ENCODE measurements at regions of chr19 and their contacts with region 1.

Region 1: DNA sequence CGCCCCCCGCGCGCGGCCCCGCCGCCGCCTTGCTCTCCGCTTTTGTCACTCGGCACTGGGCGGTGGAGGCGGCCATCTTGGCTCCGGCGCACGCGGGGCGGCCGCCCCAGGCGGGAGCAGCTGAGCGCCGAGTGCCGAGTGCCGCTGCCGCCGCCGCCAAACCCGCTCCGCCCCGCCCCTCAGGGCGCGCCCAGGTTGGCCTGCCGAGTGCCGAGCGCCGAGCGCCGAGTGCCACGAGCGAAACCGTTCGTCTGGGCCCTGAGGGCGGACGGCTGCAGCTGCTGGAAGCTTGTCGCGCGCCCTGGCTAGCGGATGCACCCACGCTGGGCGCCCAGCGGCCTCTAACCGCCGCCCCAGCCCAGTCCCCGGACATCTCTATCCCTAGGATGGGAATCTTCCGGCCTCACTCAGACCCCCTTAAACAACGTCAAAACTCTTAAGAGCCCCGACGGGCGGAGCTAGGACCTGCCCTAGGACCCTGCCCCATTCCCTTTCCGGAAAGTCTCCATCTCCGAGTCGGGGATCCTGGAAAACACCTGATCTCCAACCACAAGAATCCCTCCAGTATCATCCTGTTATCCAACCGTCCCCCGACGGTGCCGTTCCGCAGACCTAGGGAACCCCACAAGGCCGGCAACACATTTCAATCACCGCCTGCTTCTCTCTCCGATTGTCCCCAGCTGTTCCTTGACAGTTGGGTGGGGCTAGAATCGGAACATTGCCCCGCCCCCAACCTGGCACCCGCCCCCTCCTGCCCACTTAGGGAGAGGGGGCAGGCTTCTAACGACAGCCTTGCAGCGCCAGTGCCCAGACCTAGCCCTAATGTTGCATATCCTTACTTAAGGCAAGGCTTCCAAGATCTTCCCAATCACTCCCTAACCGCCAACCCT is 14.1 kb upstream of the AKAP8L start:
- DNase-seq: peak; percentile 93
- H3K4me3 ChIP-seq: peak overlapping the region; percentile 58 to 99 (median 92)
- H3K27ac ChIP-seq: peak overlapping the region; percentile 84 to 95 (median 88)
- H3K4me1 ChIP-seq: peaks cover 0 to 52% (median 42%) of the 10 kb centered on the region in 4 donors
- H3K27me3 ChIP-seq: no peaks in the 10 kb centered on the region
- CTCF ChIP-seq: no peak
- EP300 ChIP-seq: no peak
- POLR2A ChIP-seq: no peak

Region 2: GRCh38 chr19:15418588-15419412 is 14.1 kb before region 1 on chr19 and contains the start of gene AKAP8L:
- intact Hi-C with region 1: loop called (anchors 1 kb)
- DNase-seq: peak; percentile 100
- H3K4me3 ChIP-seq: peak within 1 kb of the TSS; percentile 73 to 81 (median 78)
- H3K27ac ChIP-seq: peak within 1 kb of the TSS; percentile 85 to 94 (median 90)
- H3K4me1 ChIP-seq: peaks cover 0 to 48% (median 42%) of the 10 kb centered on the region in 4 donors
- H3K27me3 ChIP-seq: no peaks in the 10 kb centered on the region
- CTCF ChIP-seq: peak; percentile 43 to 50 (median 46)
- EP300 ChIP-seq: no peak
- POLR2A ChIP-seq: peak; percentile 94 to 95
- total RNA-seq, gene AKAP8L: 90.5 to 145 (median 101) TPM

Region 3: GRCh38 chr19:15498911-15499317 is 66.0 kb after region 1 on chr19:
- intact Hi-C with region 1: no loop called
- DNase-seq: no peak
- H3K4me3 ChIP-seq: no peak overlapping the region
- H3K27ac ChIP-seq: no peak overlapping the region
- H3K4me1 ChIP-seq: no peaks in the 10 kb centered on the region
- H3K27me3 ChIP-seq: peaks cover 0 to 23% (median 5%) of the 10 kb centered on the region in 3 donors
- CTCF ChIP-seq: no peak
- EP300 ChIP-seq: no peak
- POLR2A ChIP-seq: no peak